ENCODE measurements at regions of chr6 and their contacts with region 1.

Region 1: GRCh38 chr6:112203577-112204349 is 50.6 kb downstream of the LAMA4 start:
- DNase-seq: peak; percentile 96
- ATAC-seq: peak; percentile 77
- H3K4me3 ChIP-seq: peak overlapping the region; percentile 33; the same call in 1 of the 2 replicates
- H3K27ac ChIP-seq: peak overlapping the region; percentile 95
- H3K4me1 ChIP-seq: peaks cover 64% of the 10 kb centered on the region
- H3K27me3 ChIP-seq: no peaks in the 10 kb centered on the region
- CTCF ChIP-seq: no peak

Region 2: GRCh38 chr6:112214739-112215269 is 11.0 kb after region 1 on chr6:
- CTCF ChIA-PET with region 1: no interaction called
- POLR2A ChIA-PET with region 1: no interaction called
- intact Hi-C with region 1: loop called (anchors 1 kb)
- DNase-seq: peak; percentile 84
- ATAC-seq: peak; percentile 86
- H3K4me3 ChIP-seq: peak overlapping the region; percentile 29; the same call in 1 of the 2 replicates
- H3K27ac ChIP-seq: peak overlapping the region; percentile 82
- H3K4me1 ChIP-seq: peaks cover 39% of the 10 kb centered on the region
- H3K27me3 ChIP-seq: no peaks in the 10 kb centered on the region
- CTCF ChIP-seq: no peak

Region 3: DNA sequence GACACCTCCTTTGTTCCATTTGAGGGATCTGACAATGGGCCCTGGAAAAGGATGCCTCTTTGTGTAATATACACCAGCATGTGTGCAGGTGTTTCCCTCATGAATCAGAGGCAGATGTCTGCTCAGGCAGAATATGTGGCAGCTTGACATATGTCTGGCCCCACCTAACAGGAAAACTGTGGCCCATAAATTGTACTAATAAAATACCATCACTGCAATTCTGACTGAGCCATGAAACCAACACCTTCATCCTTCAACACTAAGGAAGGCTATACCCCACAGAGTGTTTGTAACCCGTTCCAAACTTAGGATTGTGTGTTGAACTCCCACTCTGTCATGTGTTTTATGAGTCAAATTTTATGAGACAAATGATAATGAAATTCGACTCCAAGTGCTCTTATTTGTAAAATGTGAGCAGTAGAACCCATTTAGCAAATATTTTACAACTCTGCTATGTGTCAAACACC is 27.9 kb after region 1 on chr6:
- CTCF ChIA-PET with region 1: no interaction called
- POLR2A ChIA-PET with region 1: no interaction called
- intact Hi-C with region 1: loop called (anchors 1 kb)
- DNase-seq: peak; percentile 80
- ATAC-seq: peak; percentile 92
- H3K4me3 ChIP-seq: no peak overlapping the region
- H3K27ac ChIP-seq: peak overlapping the region; percentile 39
- H3K4me1 ChIP-seq: peaks cover 34% of the 10 kb centered on the region
- H3K27me3 ChIP-seq: no peaks in the 10 kb centered on the region
- CTCF ChIP-seq: no peak

Region 4: GRCh38 chr6:112253841-112254816 is 50.4 kb after region 1 on chr6 and contains the start of gene LAMA4:
- CTCF ChIA-PET with region 1: no interaction called
- POLR2A ChIA-PET with region 1: no interaction called
- intact Hi-C with region 1: loop called (anchors 5 kb)
- DNase-seq: peak; percentile 50
- ATAC-seq: peak; percentile 70
- H3K4me3 ChIP-seq: peak within 1 kb of the TSS; percentile 80
- H3K27ac ChIP-seq: peak within 1 kb of the TSS; percentile 16; the same call in 1 of the 2 replicates
- H3K4me1 ChIP-seq: peaks cover 13% of the 10 kb centered on the region
- H3K27me3 ChIP-seq: no peaks in the 10 kb centered on the region
- CTCF ChIP-seq: no peak
- total RNA-seq, gene LAMA4: 9.4 and 18.3 TPM in 2 replicates

Region 5: GRCh38 chr6:112296122-112296521 is 92.4 kb after region 1 on chr6:
- CTCF ChIA-PET with region 1: no interaction called
- POLR2A ChIA-PET with region 1: no interaction called
- intact Hi-C with region 1: loop called (anchors 5 kb)
- DNase-seq: peak; percentile 56
- ATAC-seq: peak; percentile 12; the same call in 1 of the 2 replicates
- H3K4me3 ChIP-seq: no peak overlapping the region
- H3K27ac ChIP-seq: no peak overlapping the region
- H3K4me1 ChIP-seq: peaks cover 47% of the 10 kb centered on the region
- H3K27me3 ChIP-seq: no peaks in the 10 kb centered on the region
- CTCF ChIP-seq: peak; percentile 62